ENCODE measurements at regions of chr1 and their contacts with region 1.

Region 1: GRCh38 chr1:183506561-183506960 is 34.3 kb downstream of the SMG7 start:
- DNase-seq: no peak
- H3K4me3 ChIP-seq: no peak overlapping the region
- H3K27ac ChIP-seq: no peak overlapping the region
- H3K4me1 ChIP-seq: peaks cover 45% of the 10 kb centered on the region
- CTCF ChIP-seq: no peak

Region 2: DNA sequence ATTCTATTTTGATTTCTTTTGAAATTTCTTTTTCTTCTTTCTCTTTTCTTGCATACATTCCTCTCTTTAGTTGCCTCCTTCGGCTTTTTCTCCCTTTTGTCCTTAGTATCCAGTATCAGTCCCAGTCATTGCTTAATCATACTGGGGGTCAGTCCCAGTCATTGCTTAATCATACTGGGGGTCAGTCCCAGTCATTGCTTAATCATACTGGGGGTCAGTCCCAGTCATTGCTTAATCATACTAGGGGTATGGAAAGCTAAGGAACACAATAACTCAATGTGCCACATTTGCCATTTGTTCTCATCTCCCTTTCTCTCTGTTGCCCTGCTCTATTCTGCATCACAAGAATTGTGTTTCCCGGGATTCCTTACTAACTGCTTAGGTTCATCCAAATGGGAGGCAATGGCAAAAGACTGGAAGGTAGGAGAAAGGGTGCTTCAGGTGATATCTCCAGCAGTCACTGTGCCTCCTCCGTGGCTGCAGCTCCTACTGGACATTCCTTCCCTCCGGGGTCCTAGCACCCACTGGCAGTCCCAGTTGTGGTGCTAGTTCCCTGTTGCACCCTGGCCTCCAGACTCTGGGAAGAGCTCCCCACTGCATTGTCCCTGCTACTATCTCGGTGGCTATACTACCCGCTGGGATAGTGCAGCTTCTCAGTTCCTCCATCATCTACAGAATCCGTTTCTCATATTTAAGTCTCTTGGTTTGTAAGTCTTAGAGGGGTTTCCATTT is 516.0 kb before region 1 on chr1:
- CTCF ChIA-PET with region 1: no interaction called
- POLR2A ChIA-PET with region 1: no interaction called
- intact Hi-C with region 1: no loop called
- DNase-seq: no peak
- H3K4me3 ChIP-seq: no peak overlapping the region
- H3K27ac ChIP-seq: no peak overlapping the region
- H3K4me1 ChIP-seq: no peaks in the 10 kb centered on the region
- CTCF ChIP-seq: no peak

Region 3: DNA sequence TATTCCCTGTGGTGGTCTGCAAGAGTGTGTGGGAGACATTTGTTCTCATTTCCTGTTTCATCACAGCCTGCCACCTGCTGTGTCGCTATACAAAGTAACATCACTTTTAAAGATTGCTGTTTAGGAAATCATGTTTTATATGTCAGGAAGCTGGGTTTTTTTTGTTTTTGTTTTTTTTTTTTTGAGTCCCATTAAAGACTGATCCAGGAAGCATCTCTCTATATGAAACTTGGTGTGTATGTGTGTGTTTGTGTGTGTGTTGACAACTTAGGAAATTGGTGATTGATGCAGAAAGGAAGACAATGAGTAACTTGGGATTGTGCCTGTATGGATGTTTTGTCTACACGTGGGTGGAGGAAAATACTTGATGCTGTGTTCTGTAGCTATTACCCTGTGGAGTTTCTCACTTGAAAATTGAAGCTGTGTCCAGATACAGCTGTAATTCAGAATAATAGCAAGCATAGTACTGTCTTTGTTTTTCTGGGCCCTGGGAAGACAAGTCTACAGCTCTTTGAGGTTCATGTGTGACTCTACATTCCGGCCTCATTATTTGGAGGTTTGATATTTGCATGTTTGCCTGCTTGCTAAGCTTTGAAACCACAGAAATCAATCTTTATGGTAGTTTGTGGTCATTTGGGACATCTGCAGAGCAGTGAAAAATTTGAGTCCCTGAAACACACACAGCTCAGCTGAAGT is 435.5 kb before region 1 on chr1:
- CTCF ChIA-PET with region 1: no interaction called
- POLR2A ChIA-PET with region 1: no interaction called
- intact Hi-C with region 1: no loop called
- DNase-seq: peak; percentile 75
- H3K4me3 ChIP-seq: peak overlapping the region; percentile 53
- H3K27ac ChIP-seq: peak overlapping the region; percentile 46
- H3K4me1 ChIP-seq: peaks cover 41% of the 10 kb centered on the region
- CTCF ChIP-seq: peak; percentile 38; the same call in 1 of the 2 replicates

Region 4: DNA sequence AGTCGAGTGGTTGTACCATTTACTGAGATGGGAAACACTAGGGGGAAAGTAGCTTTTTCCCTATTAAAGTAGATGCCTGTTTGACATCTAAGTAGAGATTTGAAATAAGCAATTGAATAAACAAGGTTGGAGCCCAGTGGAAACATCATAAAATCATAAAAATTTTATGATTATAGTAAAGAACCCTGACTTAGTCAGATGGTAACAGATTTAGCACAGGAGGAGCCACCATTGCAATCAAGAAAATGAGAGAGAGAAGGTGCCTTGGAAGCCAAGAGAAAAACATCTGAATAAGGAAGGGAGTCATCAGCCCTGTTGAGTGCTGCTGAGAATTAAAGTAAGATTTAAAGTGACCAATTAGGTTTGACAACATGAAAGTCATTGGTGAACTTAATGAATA is 15.5 kb after region 1 on chr1:
- CTCF ChIA-PET with region 1: no interaction called
- POLR2A ChIA-PET with region 1: interaction called, 33 read pairs
- intact Hi-C with region 1: no loop called
- DNase-seq: no peak
- H3K4me3 ChIP-seq: no peak overlapping the region
- H3K27ac ChIP-seq: no peak overlapping the region
- H3K4me1 ChIP-seq: peaks cover 13% of the 10 kb centered on the region
- CTCF ChIP-seq: no peak

Region 5: GRCh38 chr1:183674339-183674738 is 167.8 kb after region 1 on chr1:
- CTCF ChIA-PET with region 1: no interaction called
- POLR2A ChIA-PET with region 1: no interaction called
- intact Hi-C with region 1: no loop called
- DNase-seq: no peak
- H3K4me3 ChIP-seq: no peak overlapping the region
- H3K27ac ChIP-seq: no peak overlapping the region
- H3K4me1 ChIP-seq: no peaks in the 10 kb centered on the region
- CTCF ChIP-seq: no peak

Measured in OCI-LY7 (cell line).